Activated CD4-positive, alpha-beta T cell treated with anti-CD3 and anti-CD28 coated beads for 36 hours (primary cell): ENCODE measurements at regions of chr19 and their contacts with region 1.

Region 1: DNA sequence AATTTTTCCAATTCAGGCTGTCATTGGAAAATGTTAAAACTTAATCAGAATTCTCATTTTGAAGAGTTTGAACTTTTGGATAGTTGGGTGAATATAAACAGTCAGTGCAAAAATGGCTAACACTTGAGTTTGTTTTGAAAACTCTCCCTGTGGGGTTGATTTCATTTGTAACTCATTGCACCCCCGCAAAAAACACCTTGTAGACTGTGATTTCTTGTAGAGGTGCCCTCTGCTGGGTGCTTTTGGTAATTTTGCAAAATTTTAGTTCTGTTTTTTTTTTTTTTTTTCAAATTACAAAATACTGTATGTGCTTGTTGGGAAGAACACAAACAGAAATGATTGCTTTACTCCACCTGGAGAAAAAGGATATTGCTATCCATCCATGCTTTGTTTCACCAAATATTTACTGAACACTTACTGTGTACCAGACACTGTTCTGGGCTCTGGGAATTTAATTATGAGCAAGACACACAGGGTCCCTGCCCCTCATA is 28.2 kb upstream of the GPI start:
- DNase-seq: peak; percentile 70
- ATAC-seq: peak; percentile 75
- H3K4me3 Mint-ChIP-seq: no peak overlapping the region
- H3K27ac Mint-ChIP-seq: peak overlapping the region; percentile 63
- H3K4me1 Mint-ChIP-seq: peaks cover 13% of the 10 kb centered on the region
- H3K27me3 Mint-ChIP-seq: no peaks in the 10 kb centered on the region

Region 2: DNA sequence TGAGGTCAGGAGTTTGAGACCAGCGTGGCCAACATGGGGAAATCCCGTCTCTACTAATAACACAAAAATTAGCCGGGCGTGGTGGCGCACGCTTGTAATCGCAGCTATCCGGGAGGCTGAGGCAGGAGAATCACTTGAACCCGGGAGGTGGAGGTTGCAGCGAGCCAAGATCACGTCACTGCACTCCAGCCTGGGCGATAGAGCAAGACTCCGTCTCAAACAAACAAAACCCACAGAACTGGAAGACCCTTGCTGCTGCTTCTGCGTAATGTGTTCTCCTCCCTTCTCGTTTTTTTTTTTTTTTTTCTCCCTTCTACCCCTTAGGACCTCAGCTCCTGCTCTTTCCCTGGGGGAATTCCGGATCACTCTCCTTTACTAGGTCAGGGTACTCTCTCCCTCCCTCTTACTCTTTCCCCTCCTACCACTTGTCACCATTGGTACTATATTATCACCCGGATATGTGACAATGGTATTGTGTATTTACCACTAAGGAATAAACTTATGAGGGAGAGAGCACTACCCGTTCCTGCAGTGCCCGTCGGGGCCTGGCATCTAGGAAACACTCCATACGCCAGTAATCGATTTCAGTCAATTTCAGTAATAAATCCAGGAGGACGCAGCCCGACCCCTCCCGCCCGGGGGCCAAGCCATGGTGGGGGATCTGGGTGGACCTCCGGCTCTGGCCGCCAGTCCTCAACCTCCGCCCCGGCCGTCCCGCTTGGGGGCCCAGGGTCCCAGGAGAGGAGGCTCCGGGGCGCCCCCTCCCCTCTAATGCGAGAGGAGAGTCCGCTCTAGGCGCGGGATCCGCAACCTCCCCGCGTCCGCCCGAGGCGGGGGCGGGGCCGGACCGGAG is 82.9 kb before region 1 on chr19:
- CTCF ChIA-PET with region 1: interaction called, 3 read pairs
- POLR2A ChIA-PET with region 1: no interaction called
- intact Hi-C with region 1: loop called (anchors 1 to 5 kb)
- DNase-seq: no peak
- ATAC-seq: peak; percentile 24
- H3K4me3 Mint-ChIP-seq: peak overlapping the region; percentile 81
- H3K27ac Mint-ChIP-seq: peak overlapping the region; percentile 98
- H3K4me1 Mint-ChIP-seq: peaks cover 30% of the 10 kb centered on the region
- H3K27me3 Mint-ChIP-seq: no peaks in the 10 kb centered on the region

Region 3: GRCh38 chr19:34375598-34375997 is 38.8 kb after region 1 on chr19:
- CTCF ChIA-PET with region 1: no interaction called
- POLR2A ChIA-PET with region 1: no interaction called
- intact Hi-C with region 1: no loop called
- DNase-seq: peak; percentile 31
- ATAC-seq: peak; percentile 86
- H3K4me3 Mint-ChIP-seq: no peak overlapping the region
- H3K27ac Mint-ChIP-seq: peak overlapping the region; percentile 51
- H3K4me1 Mint-ChIP-seq: peaks cover 22% of the 10 kb centered on the region
- H3K27me3 Mint-ChIP-seq: no peaks in the 10 kb centered on the region

Region 4: GRCh38 chr19:34490141-34490766 is 153.4 kb after region 1 on chr19:
- CTCF ChIA-PET with region 1: no interaction called
- POLR2A ChIA-PET with region 1: no interaction called
- intact Hi-C with region 1: no loop called
- DNase-seq: no peak
- ATAC-seq: no peak
- H3K4me3 Mint-ChIP-seq: no peak overlapping the region
- H3K27ac Mint-ChIP-seq: no peak overlapping the region
- H3K4me1 Mint-ChIP-seq: no peaks in the 10 kb centered on the region
- H3K27me3 Mint-ChIP-seq: peaks cover 10% of the 10 kb centered on the region